ENCODE measurements at regions of chr11 and their contacts with region 1.

Region 1: GRCh38 chr11:47578524-47579460 is at the starts of genes KBTBD4 and NDUFS3:
- DNase-seq: peak; percentile 92
- ATAC-seq: peak; percentile 96
- H3K4me3 Mint-ChIP-seq: peak within 1 kb of the TSS; percentile 87
- H3K27ac Mint-ChIP-seq: peak within 1 kb of the TSS; percentile 93
- H3K4me1 Mint-ChIP-seq: peaks cover 39% of the 10 kb centered on the region
- H3K27me3 Mint-ChIP-seq: no peaks in the 10 kb centered on the region
- total RNA-seq, gene KBTBD4: 11.9 to 18.4 TPM
- total RNA-seq, gene NDUFS3: 96.9 to 108 TPM

Region 2: DNA sequence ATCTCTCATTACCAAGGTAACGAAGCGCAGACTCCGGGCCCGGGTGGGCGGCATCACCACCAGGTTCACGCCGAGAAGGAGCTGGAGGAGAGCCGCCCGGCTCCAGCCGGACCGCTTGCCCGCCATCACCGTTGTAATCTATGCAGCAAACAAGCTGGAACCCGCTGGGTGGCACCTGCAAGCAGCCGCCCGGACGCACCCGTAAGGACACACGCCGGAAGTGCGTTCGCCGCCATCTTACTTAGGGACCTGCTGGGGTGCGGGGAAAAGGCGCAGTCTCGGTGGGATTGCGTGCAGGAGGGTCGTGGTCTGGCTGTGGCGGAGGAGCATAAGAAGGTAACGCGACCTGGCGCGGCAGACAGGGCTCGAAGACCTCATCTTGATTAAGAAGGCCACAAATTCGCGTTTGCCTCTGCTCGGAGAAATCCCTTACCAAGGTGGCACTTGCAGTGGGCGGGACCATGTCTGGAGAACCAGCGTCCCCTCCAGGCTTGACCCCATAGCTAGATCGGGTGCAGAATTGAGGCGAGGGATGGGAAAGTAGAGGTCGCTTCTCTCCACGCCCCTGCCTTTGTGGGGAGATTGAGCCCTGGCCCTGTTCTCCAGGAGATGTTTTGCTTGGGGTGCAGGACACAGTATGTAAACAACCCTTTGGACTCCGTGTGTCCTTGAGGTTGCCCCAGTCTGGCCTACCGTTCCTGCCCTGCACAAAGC is 330.0 kb before region 1 on chr11 and contains the start of gene ACP2:
- CTCF ChIA-PET with region 1: no interaction called
- POLR2A ChIA-PET with region 1: no interaction called
- intact Hi-C with region 1: loop called in 1 of 2 experiments (anchors 1 kb)
- DNase-seq: peak; percentile 94
- ATAC-seq: peak; percentile 97
- H3K4me3 Mint-ChIP-seq: peak within 1 kb of the TSS; percentile 78
- H3K27ac Mint-ChIP-seq: peak within 1 kb of the TSS; percentile 95
- H3K4me1 Mint-ChIP-seq: peaks cover 22% of the 10 kb centered on the region
- H3K27me3 Mint-ChIP-seq: no peaks in the 10 kb centered on the region
- total RNA-seq, gene ACP2: 10.2 to 11.2 TPM

Region 3: GRCh38 chr11:47514825-47515647 is 63.8 kb before region 1 on chr11:
- CTCF ChIA-PET with region 1: no interaction called
- POLR2A ChIA-PET with region 1: no interaction called
- intact Hi-C with region 1: loop called in 1 of 2 experiments (anchors 2 kb)
- DNase-seq: peak; percentile 69
- ATAC-seq: peak; percentile 95
- H3K4me3 Mint-ChIP-seq: peak overlapping the region; percentile 0
- H3K27ac Mint-ChIP-seq: peak overlapping the region; percentile 84
- H3K4me1 Mint-ChIP-seq: peaks cover 89% of the 10 kb centered on the region
- H3K27me3 Mint-ChIP-seq: no peaks in the 10 kb centered on the region

Region 4: DNA sequence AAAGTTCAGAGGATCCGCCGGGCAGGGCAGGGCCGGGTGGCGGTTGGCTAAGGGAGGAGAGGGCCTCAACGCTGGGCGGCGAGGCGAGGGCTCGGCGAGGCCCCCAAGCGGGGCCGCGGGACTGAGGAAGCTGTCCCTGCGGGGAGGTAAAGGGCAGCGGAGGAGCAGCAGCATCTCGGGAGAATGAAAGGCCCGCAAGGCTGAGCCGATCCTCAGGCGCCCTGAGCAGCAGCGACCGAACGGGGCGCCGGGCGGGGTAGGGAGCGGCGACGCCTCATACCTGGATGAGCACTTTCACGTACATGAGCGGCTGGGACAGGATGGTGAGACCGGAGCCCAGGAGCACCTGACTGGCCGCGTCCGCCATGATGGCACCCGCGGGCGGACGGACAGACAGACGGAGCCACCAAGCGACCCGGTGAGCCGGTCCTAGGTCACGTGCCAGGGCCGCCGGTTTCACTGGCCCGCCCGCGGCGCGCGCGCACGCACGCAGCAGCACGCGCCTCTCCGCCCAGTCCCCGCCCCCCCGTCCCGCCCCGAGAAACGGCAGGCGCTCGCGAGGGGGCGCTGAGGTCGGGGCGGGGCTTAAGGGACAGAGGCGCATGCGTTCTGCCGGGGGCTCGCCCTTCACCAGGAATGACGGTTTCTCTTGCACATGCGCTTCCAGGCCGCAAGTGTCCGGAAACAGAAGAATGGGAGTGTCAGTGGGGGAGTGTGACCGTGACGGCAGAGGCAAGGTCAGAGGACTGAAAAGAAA is 63.5 kb after region 1 on chr11 and contains the start of gene MTCH2:
- CTCF ChIA-PET with region 1: interaction called, 3 read pairs
- POLR2A ChIA-PET with region 1: no interaction called
- intact Hi-C with region 1: loop called (anchors 1 kb)
- DNase-seq: peak; percentile 98
- ATAC-seq: peak; percentile 94
- H3K4me3 Mint-ChIP-seq: peak within 1 kb of the TSS; percentile 99
- H3K27ac Mint-ChIP-seq: peak within 1 kb of the TSS; percentile 96
- H3K4me1 Mint-ChIP-seq: peaks cover 25% of the 10 kb centered on the region
- H3K27me3 Mint-ChIP-seq: no peaks in the 10 kb centered on the region
- total RNA-seq, gene MTCH2: 94.8 to 138 TPM